ENCODE measurements at regions of chr13 and their contacts with region 1.

Region 1: GRCh38 chr13:27826379-27827353 is 34.4 kb downstream of the GSX1 start:
- ATAC-seq: peak; percentile 76 to 94 (median 89)
- H3K4me3 ChIP-seq: peak overlapping the region; percentile 16 to 32 (median 27)
- H3K27ac ChIP-seq: no peak overlapping the region
- H3K4me1 ChIP-seq: peaks cover 3 to 6% of the 10 kb centered on the region in 2 donors

Region 2: DNA sequence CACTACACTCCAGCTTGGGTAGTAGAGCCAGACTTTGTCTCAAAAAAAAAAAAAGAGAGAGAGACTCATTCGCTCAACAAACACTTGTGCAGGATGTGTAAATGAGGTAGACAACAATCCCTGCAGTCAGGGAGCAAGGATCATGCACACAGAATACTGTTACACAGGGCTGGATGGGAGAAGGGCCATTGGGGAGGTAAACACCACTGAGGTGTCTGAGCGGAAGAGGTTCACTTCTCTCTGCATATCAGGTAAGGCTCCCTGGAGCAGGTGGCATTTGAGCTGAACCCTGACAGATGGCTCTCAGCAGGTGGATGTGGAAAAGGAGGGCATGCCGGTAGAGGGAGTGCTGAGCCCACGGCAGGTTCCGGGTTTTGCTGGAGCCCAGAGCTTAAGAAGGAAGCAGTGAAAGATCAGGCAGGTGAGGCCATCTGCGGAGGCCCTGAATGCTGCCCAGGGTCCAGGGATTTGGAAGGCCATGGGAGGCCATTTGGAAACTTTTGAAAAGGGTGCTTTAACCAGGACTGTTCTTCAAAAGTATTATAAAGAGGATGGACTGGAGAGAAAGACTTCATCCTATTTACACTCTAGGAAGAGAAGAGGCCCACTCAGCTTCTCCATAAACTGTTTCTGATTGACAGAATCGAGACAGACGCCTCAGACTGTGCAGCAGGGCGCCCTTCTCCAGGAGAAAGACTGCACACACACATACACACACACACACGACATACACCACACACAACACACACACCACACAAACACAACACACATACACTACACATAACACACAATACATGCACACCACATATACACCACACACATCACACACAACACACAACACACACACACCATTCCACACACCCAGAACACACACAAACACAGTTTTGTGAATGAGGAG is 854.4 kb before region 1 on chr13:
- in situ Hi-C with region 1: loop called in 1 of 9 experiments (anchors 25 kb)
- ATAC-seq: peak in 2 of 8 experiments; percentile 29 to 30
- H3K4me3 ChIP-seq: no peak overlapping the region
- H3K27ac ChIP-seq: no peak overlapping the region
- H3K4me1 ChIP-seq: peaks cover 0 to 3% of the 10 kb centered on the region in 2 donors

Region 3: GRCh38 chr13:27362064-27362883 is 464.4 kb before region 1 on chr13:
- in situ Hi-C with region 1: loop called in 1 of 9 experiments (anchors 10 kb)
- ATAC-seq: peak; percentile 95 to 99 (median 98)
- H3K4me3 ChIP-seq: peak overlapping the region; percentile 14 to 42 (median 31)
- H3K27ac ChIP-seq: no peak overlapping the region
- H3K4me1 ChIP-seq: no peaks in the 10 kb centered on the region

Region 4: GRCh38 chr13:27374650-27375049 is 452.0 kb before region 1 on chr13:
- in situ Hi-C with region 1: loop called in 7 of 9 experiments (anchors 10 to 25 kb)
- ATAC-seq: peak; percentile 80 to 96 (median 88)
- H3K4me3 ChIP-seq: no peak overlapping the region
- H3K27ac ChIP-seq: no peak overlapping the region
- H3K4me1 ChIP-seq: peaks cover 0 to 3% of the 10 kb centered on the region in 2 donors

Region 5: DNA sequence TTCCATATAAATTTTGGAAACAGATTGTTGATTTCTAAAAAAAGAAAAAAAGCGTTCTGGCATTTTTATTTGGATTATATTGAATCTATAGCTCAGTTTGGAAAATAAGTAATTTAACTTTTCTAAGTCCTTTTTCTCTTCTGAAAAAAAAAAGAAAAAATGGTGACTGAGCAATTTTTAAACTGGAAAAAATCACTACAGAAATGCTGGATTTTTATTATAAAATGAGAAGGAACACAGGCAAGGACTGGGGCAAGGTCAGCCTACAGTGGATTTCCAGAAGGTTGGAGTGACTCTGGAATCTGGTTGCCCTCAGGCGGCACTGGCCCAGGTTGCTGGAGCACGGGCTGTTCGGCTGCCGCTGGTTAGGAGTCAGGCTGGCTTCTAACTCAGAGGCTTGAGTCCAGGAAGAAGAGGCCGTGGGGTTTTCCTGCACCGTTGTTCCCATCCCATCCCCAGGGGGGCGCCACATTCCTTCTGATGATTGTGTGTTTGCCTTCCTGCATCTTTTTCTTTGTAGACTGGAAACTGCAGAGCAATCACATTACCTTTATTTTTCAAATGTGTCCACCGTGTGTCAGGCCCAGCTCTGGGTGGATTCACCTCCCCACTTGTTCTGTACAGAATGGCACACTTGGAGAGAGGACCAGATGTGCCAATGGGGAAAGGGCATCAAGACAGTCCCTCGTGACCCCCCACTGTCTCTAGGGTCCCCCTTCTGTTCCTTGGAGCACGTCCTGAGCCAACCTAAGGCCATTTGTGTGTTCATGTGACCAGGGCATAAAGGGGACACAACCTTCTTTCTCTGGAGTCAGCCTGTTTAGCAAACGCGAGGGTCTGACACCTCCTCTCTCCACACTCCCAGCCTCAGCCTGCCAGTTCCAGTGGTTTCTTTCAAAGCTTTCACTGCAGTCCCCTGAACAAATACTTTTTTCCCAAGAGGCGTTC is 446.7 kb before region 1 on chr13:
- in situ Hi-C with region 1: loop called in 7 of 9 experiments (anchors 10 to 25 kb)
- ATAC-seq: peak; percentile 70 to 94 (median 80)
- H3K4me3 ChIP-seq: no peak overlapping the region
- H3K27ac ChIP-seq: no peak overlapping the region
- H3K4me1 ChIP-seq: peaks cover 9 to 15% of the 10 kb centered on the region in 2 donors

Region 6: GRCh38 chr13:27953676-27954405 is 127.2 kb after region 1 on chr13:
- in situ Hi-C with region 1: loop called in 1 of 9 experiments (anchors 25 kb)
- ATAC-seq: peak; percentile 98 to 100 (median 99)
- H3K4me3 ChIP-seq: peak overlapping the region; percentile 26 to 49 (median 38)
- H3K27ac ChIP-seq: no peak overlapping the region
- H3K4me1 ChIP-seq: no peaks in the 10 kb centered on the region

Region 7: DNA sequence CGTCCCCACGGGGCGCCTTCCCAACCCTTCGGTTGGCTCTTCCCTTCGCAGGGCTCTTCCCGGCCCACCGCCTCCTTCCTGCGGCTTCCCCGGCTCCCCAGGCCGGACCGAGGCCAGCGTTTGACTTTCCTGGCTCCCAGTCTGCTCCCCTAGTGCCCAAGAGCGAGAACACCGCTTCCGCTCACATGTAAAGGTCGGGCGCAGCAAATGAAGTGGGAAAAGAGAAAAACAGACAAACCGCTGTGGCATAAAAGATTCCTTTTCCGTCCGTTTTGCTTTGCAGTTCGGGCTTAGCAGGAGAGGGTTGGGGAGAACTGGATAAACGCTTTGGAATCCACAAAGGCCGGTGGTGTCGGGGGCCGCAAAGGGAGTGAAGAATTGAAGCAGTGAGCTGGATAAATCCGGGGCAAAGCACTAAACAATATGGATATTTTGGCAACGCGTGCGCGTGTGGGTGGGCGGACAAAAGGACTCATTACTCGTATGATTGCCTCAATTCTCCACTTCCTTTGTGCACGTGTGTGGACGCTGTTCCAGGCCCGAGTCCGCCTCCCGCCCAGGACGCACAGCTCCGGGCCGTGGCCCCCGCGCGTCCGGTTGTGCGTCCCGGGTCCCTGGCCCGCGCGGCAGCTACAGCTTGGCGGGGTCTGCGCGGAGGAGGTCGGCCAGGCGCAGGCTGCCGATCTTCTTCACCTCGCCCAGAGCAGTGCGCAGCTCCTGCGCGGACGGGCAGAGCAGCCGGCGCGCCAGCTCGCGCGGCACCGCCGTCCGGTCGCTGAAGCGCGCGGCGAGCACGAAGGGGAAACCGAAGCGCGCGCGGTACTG is 151.0 kb after region 1 on chr13:
- in situ Hi-C with region 1: loop called in 2 of 9 experiments (anchors 10 to 25 kb)
- ATAC-seq: peak in 1 of 8 experiments; percentile 19
- H3K4me3 ChIP-seq: peak overlapping the region in 1 of 5 donors; percentile 9
- H3K27ac ChIP-seq: no peak overlapping the region
- H3K4me1 ChIP-seq: peaks cover 0 to 3% of the 10 kb centered on the region in 2 donors